Naive thymus-derived CD4-positive, alpha-beta T cell (primary cell): ENCODE measurements at regions of chr4 and their contacts with region 1.

Region 1: DNA sequence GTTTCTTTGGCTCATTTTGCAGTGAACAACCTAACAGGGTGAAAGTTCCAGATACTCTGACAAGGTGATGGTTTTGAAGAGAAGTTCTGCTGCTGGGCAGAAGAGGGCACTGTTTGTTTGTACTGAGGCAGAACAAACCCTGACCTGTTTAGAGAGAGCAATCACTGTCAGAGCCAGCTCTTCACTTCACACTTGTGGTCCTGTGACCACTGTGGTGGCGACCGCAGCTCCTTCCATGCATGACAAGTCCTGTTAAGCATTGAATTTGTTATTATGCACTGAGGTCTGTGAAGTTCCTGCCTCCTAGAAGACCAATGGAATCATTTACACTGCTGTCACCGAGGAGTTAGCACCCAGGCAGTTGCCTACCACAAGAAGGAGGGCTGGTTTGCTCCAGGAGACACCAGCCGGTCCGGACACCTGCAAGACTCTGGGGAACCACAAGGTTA is 86.6 kb downstream of the ZNF330 start:
- DNase-seq: peak; percentile 11 to 57 (median 43)
- ATAC-seq: peak; percentile 94
- H3K4me3 ChIP-seq: no peak overlapping the region
- H3K4me3 Mint-ChIP-seq: no peak overlapping the region
- H3K27ac ChIP-seq: no peak overlapping the region
- H3K27ac Mint-ChIP-seq: no peak overlapping the region
- H3K4me1 ChIP-seq: no peaks in the 10 kb centered on the region
- H3K4me1 Mint-ChIP-seq: peaks cover 0 to 5% (median 0%) of the 10 kb centered on the region in 7 donors
- H3K27me3 ChIP-seq: no peaks in the 10 kb centered on the region
- H3K27me3 Mint-ChIP-seq: peaks cover 0 to 10% (median 4%) of the 10 kb centered on the region in 5 donors

Region 2: DNA sequence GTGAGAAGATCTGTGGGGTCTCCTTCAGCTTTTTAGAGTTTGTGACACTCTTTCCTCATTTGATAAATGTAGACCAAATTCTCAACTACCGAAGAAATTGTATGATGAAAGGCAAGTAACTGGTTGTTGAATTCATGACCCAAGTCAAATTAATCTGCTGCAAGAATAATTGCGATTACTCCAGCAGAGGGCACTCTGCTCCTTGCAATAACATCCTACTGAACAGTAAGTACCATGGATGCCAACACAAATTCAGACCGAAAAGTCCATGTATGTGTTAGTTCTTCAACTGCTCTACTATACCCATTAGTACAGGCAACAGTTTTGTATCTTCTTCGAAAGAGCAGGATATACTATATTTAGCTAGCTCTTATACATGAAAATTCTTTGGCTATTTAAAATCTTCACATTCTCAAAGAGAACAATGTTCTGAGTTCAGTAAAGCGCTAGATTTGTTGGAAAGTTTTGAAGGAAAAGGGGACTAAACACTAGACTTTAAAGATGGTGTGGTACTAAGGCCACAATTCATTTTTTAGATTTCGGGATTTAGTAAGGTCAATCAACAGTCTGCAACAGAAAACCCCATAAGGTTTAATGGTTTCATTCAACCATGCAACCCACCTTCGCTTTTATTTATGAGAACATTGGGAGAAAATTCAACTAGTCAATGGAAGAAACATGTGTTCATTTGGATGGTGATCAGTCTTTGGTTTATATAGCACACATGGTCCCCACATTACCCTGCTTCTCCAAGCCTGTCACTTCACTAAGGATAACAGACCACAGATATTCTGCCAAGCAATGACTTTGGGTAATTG is 445.7 kb before region 1 on chr4:
- CTCF ChIA-PET with region 1: no interaction called
- POLR2A ChIA-PET with region 1: no interaction called
- intact Hi-C with region 1: loop called in 1 of 2 experiments (anchors 2 kb)
- DNase-seq: peak in 6 of 9 donors; percentile 4 to 49 (median 36)
- ATAC-seq: peak; percentile 66
- H3K4me3 ChIP-seq: no peak overlapping the region
- H3K4me3 Mint-ChIP-seq: no peak overlapping the region
- H3K27ac ChIP-seq: no peak overlapping the region
- H3K27ac Mint-ChIP-seq: no peak overlapping the region
- H3K4me1 ChIP-seq: no peaks in the 10 kb centered on the region
- H3K4me1 Mint-ChIP-seq: peaks cover 0 to 14% (median 5%) of the 10 kb centered on the region in 7 donors
- H3K27me3 ChIP-seq: no peaks in the 10 kb centered on the region
- H3K27me3 Mint-ChIP-seq: peaks cover 18 to 28% (median 23%) of the 10 kb centered on the region in 5 donors

Region 3: DNA sequence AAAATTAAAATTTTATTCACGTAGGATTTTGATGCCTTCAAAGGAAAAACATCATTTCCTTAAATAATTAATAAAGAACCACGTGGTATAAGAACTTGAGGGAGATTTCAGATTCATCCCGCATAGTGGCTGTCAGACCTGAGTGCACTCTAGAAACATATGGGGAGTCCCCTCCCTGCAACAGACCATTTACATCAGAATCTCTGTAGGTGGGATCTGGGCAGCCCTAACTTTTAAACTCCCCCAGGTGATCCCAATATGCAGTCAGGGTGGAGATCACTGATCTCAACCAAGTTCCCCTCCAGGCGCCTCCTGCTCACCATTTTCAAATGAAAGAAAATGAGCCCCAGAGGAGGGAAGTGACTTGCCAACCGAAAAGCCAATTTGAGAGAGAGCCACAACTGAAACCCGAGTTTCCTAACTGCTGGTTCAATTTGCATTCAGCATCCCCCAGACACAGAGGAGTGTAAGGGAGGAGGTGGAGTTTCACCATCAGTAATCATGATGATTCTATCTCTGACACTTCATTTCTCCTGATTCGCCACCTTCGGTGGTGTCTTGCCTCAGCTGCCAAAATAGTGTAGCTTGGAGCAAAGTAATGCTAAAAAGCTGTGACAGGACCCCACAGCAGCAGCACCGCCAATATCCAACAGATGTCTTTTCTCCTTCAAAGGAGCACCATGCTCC is 185.4 kb before region 1 on chr4:
- CTCF ChIA-PET with region 1: no interaction called
- POLR2A ChIA-PET with region 1: no interaction called
- intact Hi-C with region 1: no loop called
- DNase-seq: no peak
- ATAC-seq: no peak
- H3K4me3 ChIP-seq: no peak overlapping the region
- H3K4me3 Mint-ChIP-seq: no peak overlapping the region
- H3K27ac ChIP-seq: no peak overlapping the region
- H3K27ac Mint-ChIP-seq: no peak overlapping the region
- H3K4me1 ChIP-seq: no peaks in the 10 kb centered on the region
- H3K4me1 Mint-ChIP-seq: peaks cover 0 to 1% (median 0%) of the 10 kb centered on the region in 7 donors
- H3K27me3 ChIP-seq: no peaks in the 10 kb centered on the region
- H3K27me3 Mint-ChIP-seq: peaks cover 8 to 20% (median 18%) of the 10 kb centered on the region in 5 donors

Region 4: GRCh38 chr4:141220655-141221605 is 86.3 kb before region 1 on chr4 and contains the start of gene ZNF330:
- CTCF ChIA-PET with region 1: interaction called, 3 read pairs
- POLR2A ChIA-PET with region 1: no interaction called
- intact Hi-C with region 1: loop called in 1 of 2 experiments (anchors 5 kb)
- DNase-seq: peak; percentile 80 to 97 (median 90)
- ATAC-seq: peak; percentile 97
- H3K4me3 ChIP-seq: peak within 1 kb of the TSS; percentile 94
- H3K4me3 Mint-ChIP-seq: peak within 1 kb of the TSS; percentile 91 to 99 (median 94)
- H3K27ac ChIP-seq: peak within 1 kb of the TSS; percentile 93
- H3K27ac Mint-ChIP-seq: peak within 1 kb of the TSS; percentile 91 to 97 (median 96)
- H3K4me1 ChIP-seq: peaks cover 9 to 13% of the 10 kb centered on the region in 2 donors
- H3K4me1 Mint-ChIP-seq: peaks cover 24 to 58% (median 52%) of the 10 kb centered on the region in 7 donors
- H3K27me3 ChIP-seq: no peaks in the 10 kb centered on the region
- H3K27me3 Mint-ChIP-seq: peaks cover 0 to 18% (median 6%) of the 10 kb centered on the region in 5 donors
- total RNA-seq, gene ZNF330: 31.7 to 44.7 (median 41.0) TPM

Region 5: DNA sequence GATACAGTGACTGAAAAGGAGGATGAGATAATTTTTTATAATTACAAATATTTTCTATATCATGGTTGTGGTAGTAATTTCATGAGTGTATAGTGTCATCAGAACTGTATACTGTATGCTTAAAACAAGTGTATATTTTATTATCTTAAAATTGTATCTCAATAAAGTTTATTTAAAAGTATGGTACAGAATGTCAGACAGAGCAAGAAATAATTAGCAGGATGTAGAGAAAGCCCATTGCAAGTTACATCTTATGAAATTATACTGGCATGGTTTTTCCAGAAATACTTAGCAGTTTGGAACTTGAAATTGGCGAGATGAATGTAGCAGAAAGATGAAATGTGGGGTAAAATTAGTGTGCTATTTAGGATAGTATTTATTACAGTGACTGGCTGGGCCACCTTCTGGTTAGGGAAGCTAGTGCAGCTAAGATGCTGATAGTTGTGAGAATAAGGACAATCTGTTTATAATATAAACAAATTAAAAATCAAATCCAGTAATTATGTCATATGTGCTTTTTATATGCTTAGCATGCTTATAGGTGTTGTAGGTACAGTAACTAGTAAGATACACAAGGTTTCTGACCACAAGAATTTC is 403.8 kb after region 1 on chr4:
- CTCF ChIA-PET with region 1: no interaction called
- POLR2A ChIA-PET with region 1: no interaction called
- intact Hi-C with region 1: loop called in 1 of 2 experiments (anchors 5 kb)
- DNase-seq: no peak
- ATAC-seq: no peak
- H3K4me3 ChIP-seq: no peak overlapping the region
- H3K4me3 Mint-ChIP-seq: no peak overlapping the region
- H3K27ac ChIP-seq: no peak overlapping the region
- H3K27ac Mint-ChIP-seq: no peak overlapping the region
- H3K4me1 ChIP-seq: peaks cover 0 to 7% of the 10 kb centered on the region in 2 donors
- H3K4me1 Mint-ChIP-seq: peaks cover 0 to under 1% (median 0%) of the 10 kb centered on the region in 7 donors
- H3K27me3 ChIP-seq: peaks cover 0 to 4% of the 10 kb centered on the region in 2 donors
- H3K27me3 Mint-ChIP-seq: peaks cover 0 to 9% (median 0%) of the 10 kb centered on the region in 5 donors

Region 6: DNA sequence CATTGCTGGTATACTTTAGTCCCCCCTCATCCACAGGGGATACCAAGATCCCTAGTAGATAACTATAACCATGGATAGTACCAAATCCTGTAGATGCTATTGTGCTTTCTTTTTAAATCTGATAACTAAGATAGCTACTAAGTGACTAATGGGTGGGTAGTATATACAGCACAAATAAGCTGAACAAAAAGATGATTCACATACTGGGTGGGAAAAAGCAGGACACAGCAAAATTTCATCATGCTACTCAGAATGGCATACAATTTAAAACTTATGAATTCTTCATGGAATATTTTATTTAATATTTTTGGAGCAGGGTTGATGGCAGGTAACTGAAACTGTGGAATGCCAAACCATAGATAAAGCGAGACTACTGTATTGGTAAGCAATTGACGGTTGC is 490.7 kb after region 1 on chr4:
- CTCF ChIA-PET with region 1: no interaction called
- POLR2A ChIA-PET with region 1: no interaction called
- intact Hi-C with region 1: no loop called
- DNase-seq: no peak
- ATAC-seq: no peak
- H3K4me3 ChIP-seq: no peak overlapping the region
- H3K4me3 Mint-ChIP-seq: no peak overlapping the region
- H3K27ac ChIP-seq: no peak overlapping the region
- H3K27ac Mint-ChIP-seq: no peak overlapping the region
- H3K4me1 ChIP-seq: no peaks in the 10 kb centered on the region
- H3K4me1 Mint-ChIP-seq: peaks cover 0 to 2% (median 0%) of the 10 kb centered on the region in 7 donors
- H3K27me3 ChIP-seq: no peaks in the 10 kb centered on the region
- H3K27me3 Mint-ChIP-seq: peaks cover 0 to 17% (median 9%) of the 10 kb centered on the region in 5 donors

Region 7: GRCh38 chr4:141810038-141810711 is 502.9 kb after region 1 on chr4:
- CTCF ChIA-PET with region 1: no interaction called
- POLR2A ChIA-PET with region 1: no interaction called
- intact Hi-C with region 1: loop called in 1 of 2 experiments (anchors 10 kb)
- DNase-seq: no peak
- ATAC-seq: no peak
- H3K4me3 ChIP-seq: no peak overlapping the region
- H3K4me3 Mint-ChIP-seq: no peak overlapping the region
- H3K27ac ChIP-seq: no peak overlapping the region
- H3K27ac Mint-ChIP-seq: no peak overlapping the region
- H3K4me1 ChIP-seq: no peaks in the 10 kb centered on the region
- H3K4me1 Mint-ChIP-seq: no peaks in the 10 kb centered on the region
- H3K27me3 ChIP-seq: no peaks in the 10 kb centered on the region
- H3K27me3 Mint-ChIP-seq: peaks cover 0 to 18% (median 0%) of the 10 kb centered on the region in 5 donors

Region 8: DNA sequence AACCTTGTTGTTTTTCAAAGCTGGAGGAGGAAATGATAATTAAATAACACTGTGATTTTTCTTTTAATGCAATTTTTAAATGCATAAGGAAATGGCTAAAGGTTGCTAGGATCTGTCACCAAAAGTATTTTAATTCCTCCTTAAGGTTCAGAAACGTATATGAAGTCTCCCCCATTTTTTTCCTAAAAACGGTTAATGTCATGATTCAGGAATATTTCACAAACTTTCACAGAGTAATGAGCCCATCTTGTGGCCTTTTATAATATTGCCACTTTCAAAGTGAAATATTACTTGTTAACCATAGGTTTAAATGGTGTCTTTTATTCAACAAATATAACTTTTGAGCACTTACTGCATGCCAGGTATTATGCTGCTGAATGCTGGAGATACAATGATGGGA is 1778.0 kb after region 1 on chr4:
- CTCF ChIA-PET with region 1: no interaction called
- POLR2A ChIA-PET with region 1: no interaction called
- intact Hi-C with region 1: loop called in 1 of 2 experiments (anchors 2 kb)
- DNase-seq: no peak
- ATAC-seq: no peak
- H3K4me3 ChIP-seq: no peak overlapping the region
- H3K4me3 Mint-ChIP-seq: no peak overlapping the region
- H3K27ac ChIP-seq: no peak overlapping the region
- H3K27ac Mint-ChIP-seq: no peak overlapping the region
- H3K4me1 ChIP-seq: no peaks in the 10 kb centered on the region
- H3K4me1 Mint-ChIP-seq: no peaks in the 10 kb centered on the region
- H3K27me3 ChIP-seq: no peaks in the 10 kb centered on the region
- H3K27me3 Mint-ChIP-seq: peaks cover 6 to 25% (median 14%) of the 10 kb centered on the region in 5 donors